ENCODE measurements at regions of chr5 and their contacts with region 1.

Region 1: DNA sequence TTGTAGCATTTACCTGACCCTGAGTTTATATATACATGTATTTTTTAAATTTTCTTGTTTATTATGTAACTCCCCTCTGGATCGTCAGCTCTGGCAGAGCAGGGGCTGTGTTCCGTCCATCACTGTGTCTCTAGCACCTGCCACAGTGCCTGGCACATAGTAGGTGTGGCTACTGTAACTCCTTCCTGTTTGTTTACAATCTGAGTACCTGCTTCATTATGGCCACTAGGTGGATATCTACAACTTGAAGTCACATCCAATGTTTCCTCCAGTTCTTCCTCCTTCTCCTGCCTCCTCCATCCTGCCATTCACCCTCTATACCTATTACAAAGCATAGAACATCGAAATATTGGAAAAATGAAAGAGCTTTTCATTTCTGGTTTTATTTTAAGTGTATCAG is 14.2 kb upstream of the PPP1R2B start:
- DNase-seq: no peak
- CTCF ChIP-seq: no peak

Region 2: GRCh38 chr5:156431956-156432829 is 403.7 kb before region 1 on chr5:
- in situ Hi-C with region 1: no loop called
- DNase-seq: no peak
- CTCF ChIP-seq: no peak

Region 3: GRCh38 chr5:156934450-156935211 is 98.7 kb after region 1 on chr5:
- in situ Hi-C with region 1: loop called (anchors 10 kb)
- DNase-seq: no peak
- CTCF ChIP-seq: peak; percentile 54

Region 4: DNA sequence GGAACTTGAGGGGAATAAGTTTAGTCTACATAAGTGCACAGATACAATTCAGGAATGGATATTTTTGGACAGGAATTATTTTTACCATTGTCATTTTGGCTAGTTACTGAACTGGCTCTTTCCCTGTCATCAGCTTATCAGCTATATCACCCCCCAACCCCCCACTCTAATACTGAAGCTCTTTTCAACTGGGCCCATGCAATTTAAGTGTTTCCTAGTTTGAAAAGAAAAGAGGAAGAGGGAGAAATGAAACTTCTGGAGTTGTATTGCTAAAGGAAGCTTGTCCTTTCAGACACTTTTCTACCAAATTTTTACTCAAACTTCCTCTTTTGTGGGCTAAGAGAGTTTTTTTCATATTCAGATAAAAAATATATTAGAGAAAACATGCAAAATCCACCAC is 145.6 kb after region 1 on chr5:
- in situ Hi-C with region 1: no loop called
- DNase-seq: no peak
- CTCF ChIP-seq: no peak

Region 5: GRCh38 chr5:157130925-157131324 is 295.0 kb after region 1 on chr5:
- in situ Hi-C with region 1: loop called (anchors 10 kb)
- DNase-seq: peak; percentile 49
- CTCF ChIP-seq: no peak